ENCODE measurements at regions of chr19 and their contacts with region 1.

Region 1: DNA sequence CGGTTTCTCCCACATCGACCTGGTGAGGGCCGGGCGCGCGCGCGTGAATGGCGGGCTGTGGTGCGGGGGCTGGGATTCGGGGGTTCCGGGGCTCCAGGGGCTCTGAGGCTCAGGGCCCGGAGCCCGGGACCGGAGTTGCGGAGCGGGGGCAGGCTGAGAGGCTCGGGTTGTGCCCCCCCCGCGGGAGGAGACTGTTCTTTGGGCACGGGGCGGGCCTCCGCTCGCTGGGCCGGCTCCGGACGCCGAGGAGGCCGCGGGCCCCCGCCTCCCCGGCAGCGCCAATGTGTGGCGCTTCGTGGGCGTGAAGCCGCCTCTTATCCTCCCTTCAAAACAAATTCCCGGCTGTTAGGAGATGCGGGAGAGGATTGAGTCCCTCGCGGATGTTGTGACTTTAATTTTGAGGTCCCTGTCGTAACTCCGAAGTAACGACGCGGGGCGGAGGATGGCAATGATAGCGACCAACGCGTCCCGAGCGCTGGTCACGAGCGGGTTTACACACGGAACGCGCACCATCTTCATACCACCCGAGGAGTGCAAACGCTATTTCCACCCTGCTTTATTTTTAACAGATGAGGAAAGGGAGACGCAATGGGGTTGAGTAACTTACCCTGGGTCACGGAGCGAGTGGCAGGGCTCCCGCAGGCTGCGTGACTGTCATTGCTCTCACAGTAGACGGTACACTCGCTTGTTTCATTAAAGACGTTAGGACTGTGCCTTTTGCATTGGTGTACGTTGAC is 536 bp downstream of the UBA2 start:
- DNase-seq: no peak

Region 2: GRCh38 chr19:34171877-34172660 is 256.6 kb before region 1 on chr19 and contains the start of gene LSM14A:
- intact Hi-C with region 1: loop called (anchors 5 kb)
- DNase-seq: peak; percentile 95
- total RNA-seq, gene LSM14A: 69.5 TPM

Region 3: GRCh38 chr19:34364830-34365462 is 63.8 kb before region 1 on chr19 and contains the start of gene GPI:
- intact Hi-C with region 1: loop called (anchors 2 kb)
- DNase-seq: peak; percentile 88
- total RNA-seq, gene GPI: 512 TPM

Region 4: GRCh38 chr19:34468409-34468808 is 39.7 kb after region 1 on chr19:
- intact Hi-C with region 1: no loop called
- DNase-seq: no peak

Region 5: DNA sequence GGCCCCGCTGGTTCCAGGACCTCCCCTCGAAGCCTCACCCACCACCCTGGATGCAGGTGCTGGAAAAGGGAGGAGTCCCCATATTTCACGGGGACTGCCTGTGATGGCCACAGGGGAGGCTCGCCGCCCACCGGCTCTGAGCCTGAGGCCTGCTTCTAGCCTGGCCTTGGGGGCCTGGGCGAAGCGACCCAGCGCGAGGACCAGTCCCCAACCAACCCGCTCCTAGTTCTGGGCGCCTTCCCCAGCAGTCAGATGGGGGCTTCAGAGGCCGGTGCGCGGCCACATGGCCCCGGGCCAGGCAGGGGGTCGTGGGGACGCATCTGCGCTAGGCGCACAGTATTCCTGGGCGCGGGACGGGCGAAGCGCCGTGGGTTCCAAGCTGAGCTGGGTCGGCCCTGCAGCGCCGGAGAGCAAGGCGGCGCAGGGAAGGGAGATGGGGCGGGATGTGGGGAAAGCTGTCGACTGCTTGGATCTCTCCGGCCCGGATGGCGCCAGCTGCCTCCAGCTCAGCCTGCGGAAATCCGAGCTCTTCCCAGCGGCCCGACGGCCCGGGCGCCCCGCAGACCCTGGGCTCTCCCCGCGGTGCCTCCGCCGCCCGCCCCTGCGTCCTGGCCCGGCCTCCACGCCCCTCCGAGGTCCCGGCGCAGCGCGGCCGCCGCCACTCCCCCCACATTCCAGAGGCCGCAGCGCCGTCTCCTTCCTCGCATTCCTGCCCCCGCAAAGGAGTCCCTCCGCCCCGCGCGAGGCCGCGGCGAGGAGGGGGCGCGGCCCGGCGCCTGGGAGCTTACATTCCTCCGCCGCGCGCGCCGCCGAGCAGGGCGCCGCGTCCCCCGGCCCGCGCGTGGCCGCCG is 52.5 kb after region 1 on chr19 and contains the start of gene WTIP:
- intact Hi-C with region 1: loop called (anchors 5 kb)
- DNase-seq: peak; percentile 84
- total RNA-seq, gene WTIP: 34.7 TPM

Region 6: DNA sequence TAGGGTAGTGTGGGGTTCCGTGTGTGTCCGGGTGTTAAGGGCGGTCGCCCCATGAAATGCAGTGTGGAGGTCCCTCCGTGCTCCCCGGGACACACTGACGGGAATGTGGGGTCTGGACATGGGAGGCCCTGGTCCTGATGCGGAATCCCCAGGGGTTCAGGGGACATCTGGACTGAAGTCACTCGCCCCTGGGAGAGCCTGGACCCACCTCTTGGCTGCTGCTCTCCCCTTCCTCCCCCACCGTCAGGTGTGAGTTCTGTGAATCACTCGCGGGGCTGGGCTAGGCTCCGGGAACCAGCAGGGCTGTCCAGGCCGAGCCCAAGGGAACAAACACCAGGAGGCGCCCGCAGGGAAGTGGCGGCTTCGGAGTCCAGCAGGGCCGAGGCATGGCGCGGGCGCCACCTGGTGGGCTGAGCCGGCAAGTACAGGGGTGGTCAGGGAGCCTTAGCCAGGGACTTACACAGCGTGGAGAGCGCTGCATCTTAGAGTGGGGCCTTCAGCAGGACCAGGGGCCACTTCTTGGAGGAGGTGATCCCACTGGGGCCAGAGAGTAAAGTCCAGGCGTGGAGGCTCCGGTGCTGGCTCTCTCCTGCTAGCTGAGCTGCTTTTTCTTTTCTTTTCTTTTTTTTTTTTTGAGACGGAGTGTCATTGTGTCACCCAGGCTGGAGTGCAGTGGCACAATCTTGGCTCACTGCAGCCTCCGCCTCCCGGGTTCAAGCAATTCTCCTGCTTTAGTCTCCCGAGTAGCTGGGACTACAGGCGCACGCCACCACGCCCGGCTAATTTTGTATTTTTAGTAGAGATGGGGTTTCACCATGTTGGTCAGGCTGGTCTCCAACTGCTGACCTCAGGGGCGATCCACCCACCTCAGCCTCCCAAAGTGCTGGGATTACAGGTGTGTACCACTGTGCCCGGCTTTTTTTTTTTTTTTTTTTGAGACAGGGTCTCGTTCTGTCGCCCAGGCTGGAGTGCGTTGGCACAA is 72.9 kb after region 1 on chr19:
- intact Hi-C with region 1: loop called (anchors 5 kb)
- DNase-seq: peak; percentile 96

Measured in cardiac septum (tissue), 1 donor.